Motor neuron (in vitro differentiated cells): ENCODE measurements at regions of chr1 and their contacts with region 1.

Region 1: DNA sequence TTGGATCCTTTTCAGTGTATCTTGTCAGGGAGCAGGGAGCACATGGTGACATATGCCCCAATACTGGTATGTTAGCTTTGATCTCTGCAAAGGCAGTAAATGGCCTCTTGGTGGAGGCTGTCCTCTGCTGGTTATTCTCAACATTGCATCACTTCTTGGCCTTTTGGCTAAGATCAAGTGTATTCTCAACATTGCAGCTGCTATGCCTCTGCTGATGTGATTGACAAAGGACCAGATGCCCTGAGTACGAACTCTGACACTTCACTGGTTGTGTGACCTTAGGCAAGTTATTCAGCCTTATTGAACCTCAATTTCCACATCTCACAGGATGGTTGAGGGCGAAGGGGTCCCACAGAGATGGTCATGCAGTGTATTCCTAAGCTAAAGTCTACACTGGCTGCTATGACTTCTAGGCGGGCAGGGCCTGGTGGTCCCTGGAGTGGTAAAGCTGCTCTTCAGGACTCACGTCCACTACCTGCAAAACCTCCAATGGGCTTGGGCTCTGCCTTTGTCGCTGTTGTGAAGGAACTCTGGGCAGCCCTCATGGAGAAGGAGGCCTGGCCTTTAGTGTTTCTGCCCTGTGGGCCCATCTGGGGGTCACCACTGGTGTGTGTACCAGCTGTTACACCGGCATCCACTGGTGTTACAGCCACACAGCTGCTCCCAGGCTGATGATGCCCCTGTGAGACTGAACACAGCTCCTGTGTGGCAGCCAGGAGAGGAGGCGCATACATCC is 64.8 kb downstream of the DNTTIP2 start:
- ATAC-seq: peak; percentile 86 to 95 (median 92)
- H3K4me3 ChIP-seq: no peak overlapping the region
- H3K27ac ChIP-seq: no peak overlapping the region
- H3K4me1 ChIP-seq: peaks cover 13 to 16% of the 10 kb centered on the region in 2 donors

Region 2: DNA sequence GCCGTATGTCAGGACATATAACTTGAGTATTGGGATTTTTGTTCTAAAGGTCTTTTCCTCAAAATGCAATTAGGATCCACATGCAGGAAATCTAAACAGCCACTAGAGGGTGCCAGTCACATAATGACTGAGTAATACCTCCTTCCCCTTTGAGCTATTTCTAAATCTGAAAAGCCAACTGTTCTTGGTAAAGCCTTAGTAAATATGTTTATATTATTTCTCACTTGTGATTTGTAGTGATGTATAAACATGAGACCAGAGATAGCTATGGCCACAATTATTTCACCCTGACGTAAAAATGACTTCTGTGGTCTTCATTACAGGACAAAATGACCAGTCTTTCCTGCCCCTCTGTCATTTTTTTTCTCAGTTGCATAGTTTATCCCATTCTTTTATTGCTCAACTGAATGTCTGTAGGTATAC is 509.5 kb before region 1 on chr1:
- in situ Hi-C with region 1: loop called in 1 of 9 experiments (anchors 25 kb)
- ATAC-seq: peak in 4 of 8 experiments; percentile 43 to 65 (median 54)
- H3K4me3 ChIP-seq: no peak overlapping the region
- H3K27ac ChIP-seq: no peak overlapping the region
- H3K4me1 ChIP-seq: no peaks in the 10 kb centered on the region

Region 3: DNA sequence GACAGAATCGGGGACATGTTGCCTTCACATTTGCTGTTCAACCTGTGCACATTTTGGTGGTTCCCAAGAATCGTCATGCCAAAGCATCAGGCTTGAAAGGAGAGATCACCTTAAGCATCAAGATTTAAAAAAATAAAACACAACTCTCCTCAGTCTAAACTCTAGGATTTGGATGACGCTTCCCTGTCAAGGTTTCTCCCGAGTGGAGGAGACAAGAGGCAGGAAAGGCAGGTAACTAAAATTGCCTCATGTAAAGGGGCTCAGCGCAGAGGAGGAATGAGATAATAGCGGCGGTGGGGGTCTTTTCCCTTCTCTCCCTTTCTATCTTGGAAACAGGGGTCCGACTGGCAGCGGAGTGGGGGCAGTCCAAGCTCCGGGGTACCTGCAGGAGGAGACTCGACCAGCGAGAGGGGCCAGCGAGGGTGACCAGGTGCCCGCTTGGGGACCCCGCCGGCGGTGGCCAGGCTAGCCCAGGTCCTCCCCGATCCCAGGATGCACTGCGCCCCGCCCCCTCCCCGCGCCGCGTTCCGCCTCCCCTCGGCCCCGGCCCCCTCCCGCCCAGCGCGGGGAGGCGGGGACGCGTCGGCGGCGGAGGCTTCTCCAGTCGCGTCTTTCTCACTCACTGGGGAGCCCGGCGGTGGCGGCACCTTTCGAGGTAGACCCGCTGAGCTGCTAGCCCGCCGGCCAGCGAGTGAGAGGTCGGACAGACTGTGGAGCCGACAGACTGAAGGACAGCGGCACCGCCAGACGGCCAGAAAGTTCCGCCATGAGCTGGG is 366.5 kb before region 1 on chr1 and contains the start of gene FNBP1L:
- in situ Hi-C with region 1: loop called in 1 of 9 experiments (anchors 25 kb)
- ATAC-seq: peak; percentile 83 to 91 (median 86)
- H3K4me3 ChIP-seq: peak within 1 kb of the TSS; percentile 92 to 97 (median 92)
- H3K27ac ChIP-seq: peak within 1 kb of the TSS; percentile 86 to 88
- H3K4me1 ChIP-seq: peaks cover 8 to 30% of the 10 kb centered on the region in 2 donors
- total RNA-seq, gene FNBP1L: 4.8 to 189 (median 125) TPM

Region 4: GRCh38 chr1:93629099-93630059 is 184.8 kb before region 1 on chr1:
- in situ Hi-C with region 1: loop called in 8 of 9 experiments (anchors 10 to 25 kb)
- ATAC-seq: peak; percentile 33 to 79 (median 74)
- H3K4me3 ChIP-seq: no peak overlapping the region
- H3K27ac ChIP-seq: no peak overlapping the region
- H3K4me1 ChIP-seq: peaks cover 12 to 15% of the 10 kb centered on the region in 2 donors